ENCODE measurements at regions of chr2 and their contacts with region 1.

Region 1: DNA sequence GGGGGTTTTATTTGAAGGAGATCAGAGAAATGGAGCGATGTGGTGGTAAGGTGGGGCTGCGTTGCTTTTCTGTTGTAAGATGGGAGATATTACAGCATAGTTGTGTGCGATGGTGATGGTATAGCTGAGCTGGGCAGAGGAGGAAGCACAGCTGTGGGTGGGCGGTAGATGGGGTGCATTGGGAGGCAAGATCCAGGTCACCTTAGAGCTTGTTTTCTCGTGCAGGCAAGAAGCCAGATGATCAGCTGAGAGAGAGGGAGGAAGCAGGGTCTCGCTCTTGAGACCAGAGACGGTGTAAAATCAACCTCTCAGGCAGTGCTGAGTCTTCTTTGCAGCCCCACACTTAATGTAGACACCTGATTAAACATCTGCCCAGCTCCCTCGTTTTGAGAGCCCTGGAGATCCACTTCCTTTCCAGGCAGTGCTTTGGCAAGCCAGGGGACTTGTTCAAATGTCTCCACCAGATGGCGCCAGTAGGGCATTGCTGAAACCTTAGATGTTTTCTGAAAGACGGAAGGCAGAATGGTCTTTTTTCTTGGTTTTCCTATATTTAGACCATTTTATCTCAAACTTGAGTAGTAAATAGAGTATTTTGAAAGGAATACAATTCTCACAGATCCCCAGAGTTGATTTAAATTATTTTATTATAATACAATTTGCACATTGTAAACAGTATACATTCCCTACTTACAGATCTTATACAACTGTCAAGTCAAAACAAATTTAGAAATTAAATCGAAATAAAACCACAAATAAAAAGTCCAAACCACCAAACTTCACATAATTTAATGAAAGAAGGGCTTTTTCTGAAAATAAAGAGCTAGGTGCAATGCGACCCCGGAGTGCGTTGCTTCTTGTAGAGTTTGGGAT is 21.1 kb upstream of the LYPD6B start:
- DNase-seq: peak; percentile 78
- H3K4me3 Mint-ChIP-seq: no peak overlapping the region
- H3K27ac Mint-ChIP-seq: no peak overlapping the region
- H3K4me1 Mint-ChIP-seq: no peaks in the 10 kb centered on the region
- H3K27me3 Mint-ChIP-seq: no peaks in the 10 kb centered on the region

Region 2: GRCh38 chr2:148802448-148803220 is 214.7 kb before region 1 on chr2:
- CTCF ChIA-PET with region 1: no interaction called
- POLR2A ChIA-PET with region 1: no interaction called
- DNase-seq: no peak
- H3K4me3 Mint-ChIP-seq: no peak overlapping the region
- H3K27ac Mint-ChIP-seq: no peak overlapping the region
- H3K4me1 Mint-ChIP-seq: no peaks in the 10 kb centered on the region
- H3K27me3 Mint-ChIP-seq: peaks cover 13% of the 10 kb centered on the region

Region 3: DNA sequence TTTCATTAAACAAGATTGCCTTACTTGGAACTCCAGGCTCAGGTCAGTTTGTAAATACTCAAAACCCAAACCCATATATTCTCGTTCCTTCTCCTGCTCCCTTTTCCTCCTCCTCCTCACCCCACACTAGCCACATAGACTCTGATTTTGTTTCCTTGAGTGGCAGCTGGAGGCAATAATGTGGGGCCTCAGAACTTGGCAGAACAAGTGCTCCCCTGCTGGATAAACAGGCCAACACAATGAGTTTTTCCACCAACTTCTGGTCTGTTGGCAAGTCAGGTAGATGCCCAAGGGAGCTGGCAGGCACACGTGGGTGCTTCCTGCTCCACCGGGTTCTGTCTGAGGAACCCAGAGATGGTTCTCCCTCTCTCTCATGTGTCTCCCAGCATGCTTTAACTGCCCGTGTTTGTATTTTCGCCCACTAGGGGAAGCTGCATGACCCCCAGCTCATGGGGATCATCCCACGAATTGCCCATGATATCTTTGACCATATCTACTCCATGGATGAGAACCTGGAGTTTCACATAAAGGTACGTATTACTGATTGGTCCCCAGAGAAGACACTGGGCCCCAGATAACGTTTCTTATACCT is 80.4 kb before region 1 on chr2:
- CTCF ChIA-PET with region 1: no interaction called
- POLR2A ChIA-PET with region 1: no interaction called
- DNase-seq: no peak
- H3K4me3 Mint-ChIP-seq: no peak overlapping the region
- H3K27ac Mint-ChIP-seq: no peak overlapping the region
- H3K4me1 Mint-ChIP-seq: no peaks in the 10 kb centered on the region
- H3K27me3 Mint-ChIP-seq: no peaks in the 10 kb centered on the region

Region 4: DNA sequence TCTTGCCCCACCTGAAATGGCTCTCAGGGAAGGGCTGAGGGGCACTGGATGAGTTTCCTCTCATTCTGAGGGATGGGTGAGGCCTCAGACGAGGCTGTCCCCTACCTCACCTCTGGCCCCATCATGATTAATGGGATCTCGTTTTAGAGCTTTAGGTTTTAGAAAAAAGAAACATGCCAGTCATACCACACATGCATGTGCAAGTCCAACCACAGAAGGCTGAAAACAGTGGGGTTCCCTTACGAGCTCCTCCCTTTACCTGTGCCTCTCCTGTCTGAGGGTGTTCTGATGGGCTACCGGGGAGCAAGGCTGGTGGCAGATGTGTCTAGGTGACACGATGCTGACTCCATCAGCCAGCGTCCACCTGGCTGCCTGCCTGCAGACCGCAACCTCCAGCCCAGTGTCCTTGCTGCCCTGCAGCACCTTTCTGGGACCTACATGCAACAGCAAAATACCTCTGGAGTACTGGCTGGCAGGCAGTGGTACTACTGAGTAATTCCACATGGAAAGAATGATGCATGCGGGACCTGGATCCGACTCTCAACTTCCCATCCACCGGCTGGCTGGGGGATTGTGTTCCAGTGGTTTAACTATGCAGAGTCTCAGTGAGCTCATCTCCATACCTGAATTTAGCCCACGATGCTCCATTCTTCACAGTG is 12.1 kb after region 1 on chr2:
- CTCF ChIA-PET with region 1: interaction called, 19 read pairs
- POLR2A ChIA-PET with region 1: no interaction called
- DNase-seq: no peak
- H3K4me3 Mint-ChIP-seq: no peak overlapping the region
- H3K27ac Mint-ChIP-seq: no peak overlapping the region
- H3K4me1 Mint-ChIP-seq: peaks cover 9% of the 10 kb centered on the region
- H3K27me3 Mint-ChIP-seq: peaks cover 7% of the 10 kb centered on the region

Region 5: DNA sequence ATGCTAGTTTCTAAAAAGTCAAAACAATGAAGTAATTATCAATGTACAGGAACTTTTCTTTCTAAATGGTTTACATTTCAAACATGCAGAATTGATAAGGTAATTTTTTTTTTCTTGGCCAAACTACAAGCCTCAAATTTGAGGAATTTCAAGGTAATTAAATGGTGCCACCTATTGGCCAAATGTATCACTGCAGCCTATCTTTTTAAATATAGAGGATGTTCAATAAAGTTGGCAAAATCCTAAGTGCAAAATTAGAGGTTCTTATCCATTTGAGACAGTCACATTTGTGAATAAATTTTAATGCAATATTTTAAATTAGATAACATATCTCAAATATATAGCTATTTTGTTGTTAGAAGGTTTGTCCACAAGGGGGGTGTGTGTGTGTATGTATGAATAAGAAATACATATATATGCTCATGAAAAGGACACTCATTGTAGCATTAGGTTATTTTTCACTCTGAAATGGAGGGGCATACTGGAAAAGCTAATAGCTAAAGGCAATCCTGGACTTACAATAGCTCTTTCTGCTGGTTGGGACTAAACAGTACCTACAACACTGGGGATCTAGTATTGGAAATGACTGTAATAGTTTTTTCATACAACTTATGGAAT is 544.1 kb after region 1 on chr2:
- CTCF ChIA-PET with region 1: interaction called, 43 read pairs
- POLR2A ChIA-PET with region 1: no interaction called
- DNase-seq: no peak
- H3K4me3 Mint-ChIP-seq: no peak overlapping the region
- H3K27ac Mint-ChIP-seq: no peak overlapping the region
- H3K4me1 Mint-ChIP-seq: peaks cover 4% of the 10 kb centered on the region
- H3K27me3 Mint-ChIP-seq: no peaks in the 10 kb centered on the region

Region 6: GRCh38 chr2:149573760-149574159 is 556.4 kb after region 1 on chr2:
- CTCF ChIA-PET with region 1: interaction called, 15 read pairs
- POLR2A ChIA-PET with region 1: interaction called, 3 read pairs
- DNase-seq: no peak
- H3K4me3 Mint-ChIP-seq: no peak overlapping the region
- H3K27ac Mint-ChIP-seq: no peak overlapping the region
- H3K4me1 Mint-ChIP-seq: peaks cover 12% of the 10 kb centered on the region
- H3K27me3 Mint-ChIP-seq: no peaks in the 10 kb centered on the region

Measured in activated CD4-positive, alpha-beta memory T cell treated with anti-CD3 and anti-CD28 coated beads, Interleukin-2, amount 10 ng/mL, durations not matched to agents 7 days and 5 days (primary cell).